ENCODE measurements at regions of chrX and their contacts with region 1.

Region 1: DNA sequence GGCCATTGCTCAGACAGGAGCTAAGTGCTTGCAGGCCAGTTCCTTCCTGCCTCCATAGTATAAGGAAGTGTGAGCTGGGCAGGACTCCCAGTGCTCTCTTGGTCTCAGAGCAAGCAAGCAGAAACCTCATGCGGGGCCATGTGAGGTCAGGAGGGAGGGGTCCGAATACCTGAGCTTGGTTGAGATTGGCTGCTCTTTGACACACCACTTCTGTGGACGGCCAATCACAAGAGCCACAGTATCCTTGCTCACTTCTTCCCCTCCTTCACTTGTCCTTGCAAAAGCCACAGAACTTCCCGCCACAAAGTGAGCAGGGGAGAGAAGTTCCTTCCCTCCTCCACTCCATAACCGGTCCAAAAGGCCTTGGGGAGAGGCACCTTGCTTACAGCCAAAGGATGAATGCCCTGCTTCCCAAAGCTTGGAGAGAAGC is 56.7 kb downstream of the PRPS1 start:
- DNase-seq: peak; percentile 83
- H3K4me3 ChIP-seq: no peak overlapping the region
- H3K27ac ChIP-seq: peak overlapping the region; percentile 14
- H3K4me1 ChIP-seq: peaks cover 41% of the 10 kb centered on the region
- H3K27me3 ChIP-seq: no peaks in the 10 kb centered on the region
- CTCF ChIP-seq: no peak
- POLR2A ChIP-seq: no peak

Region 2: GRCh38 chrX:107076158-107076557 is 608.8 kb before region 1 on chrX:
- CTCF ChIA-PET with region 1: no interaction called
- POLR2A ChIA-PET with region 1: no interaction called
- dilution Hi-C with region 1: no loop called
- intact Hi-C with region 1: no loop called
- DNase-seq: no peak
- H3K4me3 ChIP-seq: no peak overlapping the region
- H3K27ac ChIP-seq: no peak overlapping the region
- H3K4me1 ChIP-seq: peaks cover 3% of the 10 kb centered on the region
- H3K27me3 ChIP-seq: no peaks in the 10 kb centered on the region
- CTCF ChIP-seq: no peak
- POLR2A ChIP-seq: no peak

Region 3: DNA sequence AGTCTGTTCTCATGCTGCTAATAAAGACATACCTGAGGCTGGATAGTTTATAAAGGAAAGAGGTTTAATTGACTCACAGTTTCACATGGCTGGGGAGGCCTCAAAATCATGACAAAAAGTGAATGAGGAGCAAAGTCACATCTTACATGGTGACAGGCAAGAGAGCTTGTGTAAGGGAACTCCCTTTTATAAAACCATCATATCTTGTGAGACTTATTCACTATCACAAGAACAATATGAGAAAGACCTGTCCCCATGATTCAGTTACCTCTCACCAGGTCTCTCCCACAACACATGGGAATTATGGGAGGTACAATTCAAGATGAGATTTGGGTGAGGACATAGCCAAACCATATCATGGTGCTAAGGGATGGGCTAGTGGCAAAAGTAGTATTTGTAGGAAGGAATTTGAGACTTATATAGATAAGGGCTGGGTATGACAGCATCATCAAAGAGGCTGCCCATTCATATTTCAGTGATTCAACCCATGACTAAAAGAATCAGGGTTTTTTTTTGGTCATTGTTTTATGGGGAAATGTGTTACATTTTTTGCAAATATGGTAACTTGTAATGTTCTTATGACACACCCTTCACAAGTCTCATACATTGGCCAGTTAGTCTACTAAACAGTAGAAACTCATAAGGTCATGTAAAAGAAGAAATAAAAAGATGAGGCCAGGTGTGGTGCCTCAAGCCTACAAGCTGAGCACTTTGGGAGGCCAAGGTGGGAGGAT is 513.4 kb before region 1 on chrX:
- CTCF ChIA-PET with region 1: no interaction called
- POLR2A ChIA-PET with region 1: no interaction called
- dilution Hi-C with region 1: no loop called
- intact Hi-C with region 1: no loop called
- DNase-seq: no peak
- H3K4me3 ChIP-seq: no peak overlapping the region
- H3K27ac ChIP-seq: no peak overlapping the region
- H3K4me1 ChIP-seq: no peaks in the 10 kb centered on the region
- H3K27me3 ChIP-seq: no peaks in the 10 kb centered on the region
- CTCF ChIP-seq: no peak
- POLR2A ChIP-seq: no peak

Region 4: DNA sequence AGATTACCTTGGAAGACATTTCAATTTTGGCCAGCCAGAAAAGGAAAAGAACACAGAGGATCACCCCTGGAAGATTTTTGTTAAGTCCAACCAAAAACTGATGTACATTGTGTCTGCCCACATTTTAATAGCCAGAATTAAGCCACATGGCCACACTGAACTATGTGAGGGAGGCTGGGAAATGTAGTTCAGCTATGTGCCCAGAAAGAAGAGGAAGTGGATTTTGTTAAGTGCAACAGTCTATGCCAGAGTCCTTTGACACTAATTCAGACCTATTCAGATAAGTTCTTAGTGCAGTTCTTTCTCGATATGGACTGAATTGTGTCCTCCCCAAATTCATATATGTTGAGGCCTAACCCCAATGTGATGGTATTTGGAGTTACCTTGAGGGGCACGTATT is 38.2 kb before region 1 on chrX:
- CTCF ChIA-PET with region 1: no interaction called
- POLR2A ChIA-PET with region 1: no interaction called
- dilution Hi-C with region 1: no loop called
- intact Hi-C with region 1: loop called (anchors 1 kb)
- DNase-seq: no peak
- H3K4me3 ChIP-seq: no peak overlapping the region
- H3K27ac ChIP-seq: no peak overlapping the region
- H3K4me1 ChIP-seq: no peaks in the 10 kb centered on the region
- H3K27me3 ChIP-seq: no peaks in the 10 kb centered on the region
- CTCF ChIP-seq: no peak
- POLR2A ChIP-seq: no peak

Region 5: GRCh38 chrX:107701493-107702121 is 16.6 kb after region 1 on chrX:
- CTCF ChIA-PET with region 1: interaction called, 3 read pairs
- POLR2A ChIA-PET with region 1: no interaction called
- dilution Hi-C with region 1: no loop called
- intact Hi-C with region 1: loop called (anchors 2 kb)
- DNase-seq: no peak
- H3K4me3 ChIP-seq: no peak overlapping the region
- H3K27ac ChIP-seq: no peak overlapping the region
- H3K4me1 ChIP-seq: no peaks in the 10 kb centered on the region
- H3K27me3 ChIP-seq: no peaks in the 10 kb centered on the region
- CTCF ChIP-seq: no peak
- POLR2A ChIP-seq: no peak

Region 6: DNA sequence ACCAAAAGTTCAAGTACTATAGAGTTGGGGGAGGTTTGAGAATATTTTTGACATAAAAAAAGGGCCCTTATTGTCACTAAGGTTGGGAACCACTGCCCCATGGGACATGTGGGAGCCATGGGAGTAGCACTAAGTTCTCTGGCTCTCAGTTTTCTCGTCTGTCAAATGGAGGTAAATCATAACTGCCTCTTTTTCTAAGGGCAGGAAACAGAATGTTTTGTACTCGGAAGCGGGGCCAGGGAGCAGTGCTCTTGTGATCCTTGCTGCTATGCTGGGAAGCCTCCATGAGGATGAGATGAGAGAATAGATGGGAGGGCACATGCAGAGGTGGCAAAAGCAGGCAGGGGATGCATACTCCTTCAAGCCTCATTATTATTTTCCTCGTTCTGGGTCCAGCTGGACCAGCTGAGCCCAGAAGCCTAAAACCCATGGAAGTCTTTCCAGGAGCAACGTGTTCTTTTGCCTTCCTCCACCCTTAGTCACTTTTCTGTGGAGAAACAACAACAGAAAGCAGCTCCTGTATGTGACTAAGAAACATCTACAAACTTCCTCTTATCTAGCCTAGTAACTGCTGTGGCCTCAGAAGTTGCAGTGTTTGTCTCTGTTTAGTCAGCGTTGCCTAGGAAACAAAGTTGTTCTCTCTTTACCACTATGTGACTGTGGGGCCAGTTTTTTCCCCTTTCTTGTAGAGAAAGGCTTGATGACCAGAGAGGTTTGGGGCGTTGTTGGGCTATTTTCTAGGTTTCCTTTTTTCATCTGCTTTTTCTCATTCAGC is 25.8 kb after region 1 on chrX:
- CTCF ChIA-PET with region 1: interaction called, 34 read pairs
- POLR2A ChIA-PET with region 1: no interaction called
- dilution Hi-C with region 1: no loop called
- intact Hi-C with region 1: loop called (anchors 1 kb)
- DNase-seq: peak; percentile 87
- H3K4me3 ChIP-seq: no peak overlapping the region
- H3K27ac ChIP-seq: peak overlapping the region; percentile 95
- H3K4me1 ChIP-seq: peaks cover 17% of the 10 kb centered on the region
- H3K27me3 ChIP-seq: no peaks in the 10 kb centered on the region
- CTCF ChIP-seq: no peak
- POLR2A ChIP-seq: no peak

Region 7: GRCh38 chrX:107731831-107732502 is 47.0 kb after region 1 on chrX:
- CTCF ChIA-PET with region 1: no interaction called
- POLR2A ChIA-PET with region 1: no interaction called
- dilution Hi-C with region 1: no loop called
- intact Hi-C with region 1: no loop called
- DNase-seq: peak; percentile 90
- H3K4me3 ChIP-seq: no peak overlapping the region
- H3K27ac ChIP-seq: peak overlapping the region; percentile 13
- H3K4me1 ChIP-seq: peaks cover 24% of the 10 kb centered on the region
- H3K27me3 ChIP-seq: no peaks in the 10 kb centered on the region
- CTCF ChIP-seq: no peak
- POLR2A ChIP-seq: peak; percentile 26